HEK293 (cell line): ENCODE measurements at regions of chr2 and their contacts with region 1.

Region 1: DNA sequence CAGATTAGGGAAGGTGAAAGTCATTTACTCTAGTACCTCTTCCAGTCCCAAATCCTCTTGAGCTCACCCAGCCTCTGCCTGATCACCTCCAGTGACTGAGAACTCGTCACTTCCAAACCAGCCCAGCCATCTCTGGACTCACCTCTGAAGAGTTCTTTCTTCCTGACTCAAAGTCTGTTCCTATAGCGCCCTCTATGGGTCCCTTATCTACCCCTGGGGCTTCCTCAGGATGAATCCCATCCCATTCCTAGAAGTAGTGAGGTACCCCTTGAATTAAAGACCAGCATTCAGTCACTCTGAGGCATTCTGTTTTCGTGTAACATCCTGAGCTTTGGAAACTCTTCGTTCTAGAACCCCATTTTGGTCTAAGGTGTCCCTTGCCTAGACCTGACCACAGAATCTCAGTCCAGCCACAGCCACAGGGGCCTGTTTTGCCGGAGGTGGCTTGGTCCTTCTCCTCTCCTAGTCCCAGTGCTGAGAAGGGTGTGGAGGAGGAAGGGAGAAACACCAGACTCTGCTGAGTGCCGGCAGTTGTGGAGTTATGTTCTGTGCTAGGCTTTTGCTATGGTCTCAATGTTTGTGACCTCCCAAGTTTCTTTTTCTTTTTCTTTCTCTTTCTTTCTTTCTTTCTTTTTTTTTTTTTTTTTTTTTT is 32.7 kb downstream of the SIX3 start:
- H3K4me3 ChIP-seq: no peak overlapping the region
- H3K27ac ChIP-seq: no peak overlapping the region
- H3K4me1 ChIP-seq: no peaks in the 10 kb centered on the region
- CTCF ChIP-seq: 0 out of 2 replicates have a peak, but pooled peaks have one; percentile 12

Region 2: DNA sequence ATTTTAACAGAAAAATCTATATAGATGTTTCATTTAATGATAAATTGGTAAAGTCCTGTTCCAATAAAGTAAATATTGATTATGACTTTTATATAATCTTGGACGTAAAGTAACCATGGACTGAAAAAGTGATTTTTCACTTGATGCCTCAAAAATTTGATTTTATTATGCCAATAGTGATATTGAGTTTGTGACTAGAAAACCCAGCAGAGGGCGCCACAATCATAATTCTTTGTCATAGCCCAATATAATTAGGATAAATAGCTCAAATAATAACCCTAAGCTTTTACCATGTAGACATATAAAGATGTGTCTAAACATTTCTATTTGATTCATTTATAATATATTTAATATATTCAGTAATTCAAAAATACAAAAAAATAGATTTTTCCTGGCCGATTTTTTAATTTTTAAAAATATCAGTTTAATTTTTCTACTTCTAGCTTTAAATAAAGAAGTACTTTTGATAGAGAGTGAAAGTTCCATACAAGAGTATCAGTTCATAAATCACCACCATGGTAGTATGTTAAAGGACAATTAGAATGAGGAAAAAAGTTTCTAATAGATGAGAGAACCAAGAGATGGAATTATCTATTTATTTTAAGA is 581.7 kb before region 1 on chr2:
- CTCF ChIA-PET with region 1: interaction called, 10 read pairs
- POLR2A ChIA-PET with region 1: no interaction called
- H3K4me3 ChIP-seq: no peak overlapping the region
- H3K27ac ChIP-seq: no peak overlapping the region
- H3K4me1 ChIP-seq: no peaks in the 10 kb centered on the region
- CTCF ChIP-seq: no peak

Region 3: DNA sequence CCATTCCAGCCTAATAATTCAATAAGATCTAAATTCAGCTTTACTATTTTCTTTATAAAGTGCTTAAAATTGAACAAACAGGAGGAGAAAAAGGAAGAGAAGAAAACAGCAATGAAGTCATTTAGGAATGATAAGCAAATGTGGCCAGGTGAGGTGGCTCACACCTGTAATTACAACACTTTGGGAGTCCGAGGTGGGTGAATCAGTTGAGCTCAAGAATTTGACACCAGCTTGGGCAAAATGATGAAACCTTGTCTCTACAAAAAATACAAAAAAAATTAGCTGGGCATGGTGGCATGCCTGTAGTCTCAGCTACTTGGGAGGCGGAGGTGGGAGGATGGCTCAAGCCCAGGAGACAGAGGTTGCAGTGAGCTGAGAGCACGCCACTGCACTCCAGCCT is 483.5 kb before region 1 on chr2:
- CTCF ChIA-PET with region 1: interaction called, 10 read pairs
- POLR2A ChIA-PET with region 1: no interaction called
- H3K4me3 ChIP-seq: no peak overlapping the region
- H3K27ac ChIP-seq: no peak overlapping the region
- H3K4me1 ChIP-seq: no peaks in the 10 kb centered on the region
- CTCF ChIP-seq: no peak